IMR-90 (cell line): ENCODE measurements at regions of chr17 and their contacts with region 1.

Region 1: GRCh38 chr17:16129441-16130205 is 85.7 kb downstream of the NCOR1 start:
- DNase-seq: no peak
- ATAC-seq: no peak
- H3K4me3 ChIP-seq: no peak overlapping the region
- H3K27ac ChIP-seq: no peak overlapping the region
- H3K4me1 ChIP-seq: no peaks in the 10 kb centered on the region
- H3K27me3 ChIP-seq: no peaks in the 10 kb centered on the region
- CTCF ChIP-seq: no peak
- POLR2A ChIP-seq: no peak
- RAD21 ChIP-seq: no peak

Region 2: DNA sequence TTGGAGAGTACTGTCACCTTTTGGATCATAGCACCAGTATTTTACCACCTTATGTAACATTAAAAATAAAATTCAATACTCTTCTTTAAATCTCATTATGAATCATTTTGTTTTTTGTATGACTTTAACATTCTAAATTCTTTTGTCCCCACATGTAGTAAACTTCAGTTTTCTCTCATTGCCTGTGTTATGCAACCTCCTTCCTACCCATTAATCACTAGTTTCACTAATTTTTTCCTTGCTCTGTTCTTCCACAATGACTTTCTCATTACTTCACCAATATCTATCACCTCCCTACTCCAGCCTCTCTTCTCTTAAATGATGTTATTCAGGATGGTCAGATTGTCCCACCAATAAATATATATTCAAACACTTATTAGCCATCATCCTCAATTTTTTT is 61.3 kb before region 1 on chr17:
- CTCF ChIA-PET with region 1: no interaction called
- POLR2A ChIA-PET with region 1: interaction called, 11 read pairs
- dilution Hi-C with region 1: no loop called
- in situ Hi-C with region 1: no loop called
- intact Hi-C with region 1: no loop called
- DNase-seq: peak; percentile 17
- ATAC-seq: peak; percentile 35; the same call in 1 of the 2 replicates
- H3K4me3 ChIP-seq: no peak overlapping the region
- H3K27ac ChIP-seq: no peak overlapping the region
- H3K4me1 ChIP-seq: peaks cover 4% of the 10 kb centered on the region; the same call in 1 of the 2 replicates
- H3K27me3 ChIP-seq: no peaks in the 10 kb centered on the region
- CTCF ChIP-seq: no peak
- POLR2A ChIP-seq: no peak
- RAD21 ChIP-seq: no peak